Activated B cell treated with CpG ODN at 0.5 μM for 24 hours (primary cell): ENCODE measurements at regions of chr1 and their contacts with region 1.

Region 1: DNA sequence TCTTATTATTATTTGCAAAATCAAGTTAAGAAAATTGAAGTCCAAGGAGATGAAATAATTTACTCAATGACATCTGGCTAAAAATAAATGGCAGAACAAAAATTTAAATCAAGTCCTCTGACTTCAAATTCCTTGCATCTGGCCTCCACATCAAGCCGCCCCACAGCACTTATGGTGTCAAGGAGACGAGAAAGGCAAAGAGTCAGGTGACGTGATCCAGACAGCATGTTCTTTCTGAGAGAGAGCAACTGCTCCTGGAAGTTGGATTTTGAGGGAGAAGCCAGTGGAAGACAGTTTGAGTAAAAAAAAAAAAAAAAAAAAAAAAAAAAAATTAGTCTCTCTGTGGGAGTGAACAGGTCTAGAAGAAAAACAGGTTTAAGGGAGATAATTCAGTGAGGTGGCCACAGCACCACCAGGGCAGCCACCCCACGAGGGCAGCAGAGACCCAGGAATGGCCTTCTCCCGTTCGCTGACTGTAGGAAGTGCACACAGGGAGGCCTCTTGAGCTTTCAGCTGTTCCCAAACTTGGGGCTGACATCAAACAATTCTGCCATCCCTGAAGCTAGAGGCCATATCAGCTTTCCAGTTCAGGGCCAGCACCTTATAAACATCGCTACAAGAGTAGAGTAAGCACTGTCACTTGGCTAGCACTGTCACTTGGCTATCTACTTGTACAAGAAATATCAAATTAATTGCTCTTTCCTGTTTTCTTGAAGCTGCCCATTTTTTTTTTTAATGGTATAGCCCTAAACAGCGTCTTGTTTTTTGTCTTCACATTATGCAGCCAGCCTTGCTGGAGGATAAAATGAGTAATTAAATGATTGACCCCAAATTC is 7.8 kb downstream of the C1orf162 start:
- DNase-seq: no peak
- ATAC-seq: peak; percentile 73
- H3K4me3 Mint-ChIP-seq: no peak overlapping the region
- H3K27ac Mint-ChIP-seq: no peak overlapping the region
- H3K4me1 Mint-ChIP-seq: peaks cover 42% of the 10 kb centered on the region
- H3K27me3 Mint-ChIP-seq: no peaks in the 10 kb centered on the region
- CTCF ChIP-seq: no peak

Region 2: DNA sequence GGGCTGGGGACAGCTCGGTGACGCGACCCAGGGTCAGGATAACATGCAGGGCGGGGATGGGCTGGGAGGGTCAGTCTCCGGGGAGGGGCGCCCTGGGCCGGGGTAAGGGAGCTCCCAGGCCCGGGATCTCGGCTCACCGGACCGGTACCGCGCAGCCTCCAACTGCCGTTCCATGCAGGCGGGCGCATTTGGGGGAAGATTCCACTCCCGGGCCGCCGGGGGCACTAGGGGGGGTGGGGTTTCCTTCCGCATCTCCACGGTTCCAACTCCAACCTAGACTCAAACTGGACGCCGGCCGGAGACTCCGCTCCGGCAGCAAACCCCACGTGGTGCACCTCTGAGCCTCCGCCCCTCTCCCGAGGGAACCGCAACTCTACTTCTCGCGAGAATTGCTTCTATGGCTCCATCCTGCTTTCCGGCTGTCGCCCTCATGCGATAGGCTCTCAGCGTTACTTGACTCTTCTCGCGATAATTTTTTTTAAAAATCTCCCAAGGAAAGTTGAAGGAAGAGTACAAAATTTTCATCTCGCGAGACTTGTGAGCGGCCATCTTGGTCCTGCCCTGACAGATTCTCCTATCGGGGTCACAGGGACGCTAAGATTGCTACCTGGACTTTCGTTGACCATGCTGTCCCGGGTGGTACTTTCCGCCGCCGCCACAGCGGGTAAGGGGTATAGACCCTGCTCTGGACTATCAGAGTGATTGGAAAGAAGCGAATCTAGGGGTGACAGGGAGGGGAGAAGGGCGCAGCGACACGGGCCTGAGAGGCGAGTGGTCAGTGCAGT is 32.5 kb before region 1 on chr1 and contains the starts of genes ATP5PB and WDR77:
- CTCF ChIA-PET with region 1: interaction called, 5 read pairs
- POLR2A ChIA-PET with region 1: interaction called, 21 read pairs
- intact Hi-C with region 1: no loop called
- DNase-seq: peak; percentile 77
- ATAC-seq: peak; percentile 96
- H3K4me3 Mint-ChIP-seq: peak within 1 kb of the TSS; percentile 100
- H3K27ac Mint-ChIP-seq: peak within 1 kb of the TSS; percentile 98
- H3K4me1 Mint-ChIP-seq: peaks cover 71% of the 10 kb centered on the region
- H3K27me3 Mint-ChIP-seq: no peaks in the 10 kb centered on the region
- CTCF ChIP-seq: no peak
- total RNA-seq, gene ATP5PB: 220 and 229 TPM in 2 replicates
- total RNA-seq, gene WDR77: 55.8 and 63.3 TPM in 2 replicates

Region 3: GRCh38 chr1:111497592-111497991 is 16.0 kb after region 1 on chr1:
- CTCF ChIA-PET with region 1: interaction called, 10 read pairs
- POLR2A ChIA-PET with region 1: interaction called, 234 read pairs
- intact Hi-C with region 1: no loop called
- DNase-seq: no peak
- ATAC-seq: peak; percentile 77
- H3K4me3 Mint-ChIP-seq: no peak overlapping the region
- H3K27ac Mint-ChIP-seq: no peak overlapping the region
- H3K4me1 Mint-ChIP-seq: peaks cover 19% of the 10 kb centered on the region
- H3K27me3 Mint-ChIP-seq: no peaks in the 10 kb centered on the region
- CTCF ChIP-seq: no peak

Region 4: DNA sequence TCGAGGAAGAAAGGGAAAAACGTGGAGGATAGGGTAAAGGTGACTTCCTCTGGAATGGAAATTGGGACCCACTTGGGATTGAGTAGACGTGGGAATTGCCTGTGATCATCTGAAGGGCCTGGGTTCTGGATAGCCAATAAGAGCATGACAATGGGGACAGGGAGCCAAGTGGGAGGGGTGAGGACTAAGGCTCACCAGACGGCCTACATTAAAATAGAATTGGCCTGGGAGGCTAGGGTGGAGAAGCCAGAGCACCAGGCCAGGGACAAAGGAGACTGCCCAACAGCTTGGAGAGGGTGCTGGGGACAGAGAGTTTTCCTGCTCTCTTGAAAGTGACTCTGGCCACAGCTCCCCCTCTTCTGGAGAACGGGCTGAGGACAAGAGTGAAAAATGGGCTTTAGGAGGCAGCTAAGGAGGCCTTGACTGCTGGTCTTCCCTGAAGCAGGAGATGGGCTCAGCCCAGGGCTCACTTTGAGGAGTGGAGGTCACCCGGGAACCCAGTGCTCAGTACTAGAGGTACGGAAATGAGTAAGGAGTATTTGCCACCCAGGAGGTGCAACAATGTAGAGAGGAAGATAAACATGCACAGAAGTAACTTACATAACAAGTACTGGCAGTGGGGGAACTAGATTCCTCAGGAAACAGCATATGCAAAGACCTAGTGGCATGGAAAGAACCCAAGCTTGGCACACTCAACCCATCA is 238.8 kb after region 1 on chr1:
- CTCF ChIA-PET with region 1: interaction called, 21 read pairs
- POLR2A ChIA-PET with region 1: no interaction called
- intact Hi-C with region 1: loop called (anchors 1 kb)
- DNase-seq: no peak
- ATAC-seq: no peak
- H3K4me3 Mint-ChIP-seq: no peak overlapping the region
- H3K27ac Mint-ChIP-seq: no peak overlapping the region
- H3K4me1 Mint-ChIP-seq: peaks cover 21% of the 10 kb centered on the region
- H3K27me3 Mint-ChIP-seq: no peaks in the 10 kb centered on the region
- CTCF ChIP-seq: no peak

Region 5: DNA sequence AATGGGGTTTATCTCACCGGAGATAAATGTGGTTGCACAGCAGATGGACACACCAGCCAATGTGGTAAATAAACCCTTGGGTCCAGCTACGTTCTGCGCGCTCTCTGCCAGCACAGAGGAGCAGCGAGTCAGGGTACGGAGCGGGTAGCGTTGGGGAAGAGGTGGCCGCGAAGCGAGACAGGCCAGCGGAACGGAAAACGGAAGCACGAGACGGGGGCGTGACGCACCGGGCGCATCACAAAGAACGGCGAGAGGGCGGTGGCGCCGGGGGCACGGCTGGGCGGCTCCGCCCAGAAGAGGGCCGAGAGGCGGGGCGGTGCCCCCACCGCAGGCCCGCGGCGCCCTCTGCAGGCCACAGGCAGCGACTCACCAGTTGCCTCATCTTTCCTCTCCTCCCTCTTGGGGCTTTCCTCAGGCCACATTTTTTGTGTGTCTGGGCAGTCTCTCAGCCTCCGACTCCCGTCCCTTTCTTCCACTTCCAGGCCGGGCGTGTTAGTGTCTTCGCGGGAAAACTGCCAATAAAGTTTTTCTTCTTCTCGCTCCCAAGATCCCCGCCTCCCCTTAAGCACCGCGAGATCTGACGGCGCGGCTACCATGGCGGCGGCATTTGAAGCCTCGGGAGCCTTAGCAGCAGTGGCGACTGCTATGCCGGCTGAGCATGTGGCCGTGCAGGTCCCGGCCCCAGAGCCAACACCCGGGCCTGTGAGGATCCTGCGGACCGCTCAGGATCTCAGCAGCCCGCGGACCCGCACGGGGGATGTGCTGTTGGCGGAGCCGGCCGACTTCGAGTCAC is 273.9 kb after region 1 on chr1 and contains the start of gene DDX20:
- CTCF ChIA-PET with region 1: interaction called, 5 read pairs
- POLR2A ChIA-PET with region 1: interaction called, 7 read pairs
- intact Hi-C with region 1: loop called (anchors 1 kb)
- DNase-seq: peak; percentile 94
- ATAC-seq: peak; percentile 89
- H3K4me3 Mint-ChIP-seq: peak within 1 kb of the TSS; percentile 97
- H3K27ac Mint-ChIP-seq: peak within 1 kb of the TSS; percentile 96
- H3K4me1 Mint-ChIP-seq: peaks cover 30% of the 10 kb centered on the region
- H3K27me3 Mint-ChIP-seq: no peaks in the 10 kb centered on the region
- CTCF ChIP-seq: peak; percentile 55
- total RNA-seq, gene DDX20: 21.5 and 22.4 TPM in 2 replicates

Region 6: GRCh38 chr1:112369392-112370285 is 888.0 kb after region 1 on chr1:
- CTCF ChIA-PET with region 1: no interaction called
- POLR2A ChIA-PET with region 1: no interaction called
- intact Hi-C with region 1: loop called (anchors 2 kb)
- DNase-seq: peak; percentile 72
- ATAC-seq: peak; percentile 100
- H3K4me3 Mint-ChIP-seq: no peak overlapping the region
- H3K27ac Mint-ChIP-seq: no peak overlapping the region
- H3K4me1 Mint-ChIP-seq: peaks cover 4% of the 10 kb centered on the region
- H3K27me3 Mint-ChIP-seq: peaks cover 37% of the 10 kb centered on the region
- CTCF ChIP-seq: peak; percentile 87